ENCODE measurements at regions of chr12 and their contacts with region 1.

Region 1: GRCh38 chr12:57058454-57058853 is 8.5 kb upstream of the MYO1A start:
- DNase-seq: no peak
- ATAC-seq: no peak

Region 2: DNA sequence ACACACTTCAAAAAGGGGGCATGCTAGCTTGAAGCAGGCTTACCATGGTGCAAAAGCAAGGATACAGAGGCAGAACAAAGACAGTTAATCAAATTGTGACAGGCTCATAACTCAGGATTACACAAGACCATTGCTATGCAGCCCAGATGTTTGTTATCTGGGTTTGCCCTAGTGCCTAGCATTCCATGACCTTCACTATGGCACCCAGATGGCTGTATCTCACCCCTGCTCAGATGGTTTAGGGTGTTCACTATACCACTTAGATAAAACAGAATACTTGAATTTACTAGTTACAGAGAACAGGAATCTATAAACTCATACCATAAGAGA is 180.5 kb before region 1 on chr12:
- intact Hi-C with region 1: no loop called
- DNase-seq: no peak
- ATAC-seq: no peak

Region 3: DNA sequence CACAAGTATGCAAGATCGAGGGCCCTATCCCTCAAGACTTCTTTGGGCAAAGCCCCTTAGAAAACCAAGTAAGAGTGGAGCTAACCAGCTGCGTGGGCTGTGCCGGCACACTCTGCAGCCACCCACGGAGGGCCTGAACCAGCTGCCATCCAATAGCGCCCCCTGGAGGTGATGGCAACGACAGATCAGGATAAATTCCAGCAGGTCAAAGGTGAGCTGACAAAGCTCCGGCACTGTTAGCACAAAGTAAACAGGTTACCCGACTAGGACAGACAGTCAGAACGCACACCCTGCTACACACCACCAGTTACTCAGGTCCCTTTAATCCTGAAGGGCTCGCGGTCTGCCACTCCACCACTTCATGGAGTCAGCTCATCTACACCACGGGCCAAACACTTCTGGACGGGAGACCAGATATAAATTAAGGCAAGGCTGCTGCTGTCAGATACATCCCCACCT is 57.0 kb before region 1 on chr12:
- intact Hi-C with region 1: no loop called
- DNase-seq: no peak
- ATAC-seq: peak; percentile 17

Region 4: DNA sequence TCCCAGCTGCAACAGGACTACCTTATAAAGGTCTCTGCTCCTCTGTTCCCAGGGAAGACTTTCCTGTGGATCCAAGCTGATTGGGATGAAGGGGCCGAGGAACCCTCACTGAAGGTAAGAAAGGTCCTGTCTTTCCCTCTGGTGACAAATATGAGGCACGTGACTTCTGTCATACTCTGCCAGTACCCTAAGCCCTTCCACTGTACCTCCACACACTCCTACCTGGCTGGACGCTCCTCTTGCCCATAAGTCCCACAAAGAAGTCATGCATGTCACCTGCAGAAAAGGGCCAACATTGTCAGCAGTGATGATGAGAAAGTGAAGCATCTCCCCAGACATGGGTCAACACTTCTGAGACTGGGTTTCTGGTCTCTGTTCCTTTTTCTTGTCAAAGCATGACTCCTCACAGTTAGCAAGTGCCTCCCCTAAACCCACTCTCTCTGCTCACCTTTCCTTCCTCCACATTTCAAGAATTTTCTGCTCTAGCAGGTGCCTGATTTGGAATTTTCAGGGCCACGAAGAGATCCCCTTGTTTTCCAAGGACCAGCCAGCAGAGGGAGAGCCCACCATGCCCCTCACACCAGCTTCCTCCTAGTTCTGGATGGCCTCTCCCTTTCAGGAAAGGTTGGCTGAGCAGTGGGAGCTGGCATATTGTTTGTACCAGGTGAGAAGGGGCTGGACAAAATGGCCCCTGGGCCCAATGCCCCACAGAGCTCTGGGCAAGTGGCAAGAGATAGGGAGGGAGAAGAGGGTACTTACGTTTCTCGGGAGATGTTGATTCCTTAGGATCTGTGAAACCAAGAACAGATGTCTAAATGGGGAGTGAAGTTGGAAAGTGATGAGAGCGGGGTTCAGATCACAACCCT is 45.6 kb before region 1 on chr12:
- intact Hi-C with region 1: loop called (anchors 5 kb)
- DNase-seq: no peak
- ATAC-seq: no peak

Region 5: GRCh38 chr12:57213058-57213715 is 154.7 kb after region 1 on chr12:
- intact Hi-C with region 1: no loop called
- DNase-seq: peak; percentile 94
- ATAC-seq: peak; percentile 70

Measured in Right ventricle myocardium inferior (tissue), 1 donor.